ENCODE measurements at regions of chr10 and their contacts with region 1.

Region 1: GRCh38 chr10:26737730-26738129 is 40.2 kb downstream of the PDSS1 start:
- DNase-seq: peak; percentile 75
- H3K4me3 Mint-ChIP-seq: no peak overlapping the region
- H3K27ac Mint-ChIP-seq: peak overlapping the region; percentile 97
- H3K4me1 Mint-ChIP-seq: peaks cover 58% of the 10 kb centered on the region
- H3K27me3 Mint-ChIP-seq: no peaks in the 10 kb centered on the region

Region 2: GRCh38 chr10:26357203-26357602 is 380.5 kb before region 1 on chr10:
- CTCF ChIA-PET with region 1: no interaction called
- POLR2A ChIA-PET with region 1: no interaction called
- intact Hi-C with region 1: loop called (anchors 1 kb)
- DNase-seq: peak; percentile 20
- H3K4me3 Mint-ChIP-seq: no peak overlapping the region
- H3K27ac Mint-ChIP-seq: no peak overlapping the region
- H3K4me1 Mint-ChIP-seq: peaks cover 11% of the 10 kb centered on the region
- H3K27me3 Mint-ChIP-seq: peaks cover 17% of the 10 kb centered on the region

Region 3: DNA sequence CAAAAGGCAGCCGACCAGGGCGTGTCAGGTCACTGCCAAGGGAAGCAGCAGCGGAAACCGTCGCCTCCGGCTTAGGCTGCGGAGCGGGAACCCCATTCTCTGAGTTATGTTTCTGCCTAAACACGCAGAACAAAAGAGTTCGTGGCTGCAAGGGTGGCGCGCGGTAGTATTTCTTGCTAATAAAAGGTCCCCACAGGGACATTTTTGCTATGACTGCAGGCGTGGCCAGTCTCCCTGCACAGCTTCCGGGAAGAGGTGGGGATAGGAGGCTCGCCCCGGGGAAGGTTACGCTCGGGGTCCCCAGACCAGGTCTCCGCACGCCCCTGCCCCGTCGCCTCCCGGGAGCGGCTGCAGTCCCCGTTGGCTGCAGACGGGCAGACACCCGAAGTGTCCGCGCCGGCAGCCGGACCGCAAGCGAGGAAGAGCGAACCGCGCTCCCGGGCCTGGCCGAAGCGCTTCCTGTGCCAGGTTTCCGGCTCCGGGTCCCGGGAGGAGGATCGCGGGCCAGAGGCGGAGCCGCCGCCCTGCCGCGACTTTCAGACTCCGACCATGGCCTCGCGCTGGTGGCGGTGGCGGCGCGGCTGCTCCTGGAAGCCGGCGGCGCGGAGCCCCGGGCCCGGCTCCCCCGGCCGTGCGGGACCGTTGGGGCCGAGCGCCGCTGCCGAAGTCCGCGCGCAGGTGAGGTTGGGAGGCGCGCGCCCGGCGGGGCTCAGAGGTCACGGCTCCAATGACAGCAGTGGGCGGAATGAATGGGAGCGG is 40.4 kb before region 1 on chr10 and contains the start of gene PDSS1:
- CTCF ChIA-PET with region 1: no interaction called
- POLR2A ChIA-PET with region 1: interaction called, 3 read pairs
- intact Hi-C with region 1: loop called (anchors 2 kb)
- DNase-seq: peak; percentile 75
- H3K4me3 Mint-ChIP-seq: peak within 1 kb of the TSS; percentile 99
- H3K27ac Mint-ChIP-seq: peak within 1 kb of the TSS; percentile 92
- H3K4me1 Mint-ChIP-seq: peaks cover 25% of the 10 kb centered on the region
- H3K27me3 Mint-ChIP-seq: no peaks in the 10 kb centered on the region
- total RNA-seq, gene PDSS1: 12.9 to 15.4 TPM

Region 4: DNA sequence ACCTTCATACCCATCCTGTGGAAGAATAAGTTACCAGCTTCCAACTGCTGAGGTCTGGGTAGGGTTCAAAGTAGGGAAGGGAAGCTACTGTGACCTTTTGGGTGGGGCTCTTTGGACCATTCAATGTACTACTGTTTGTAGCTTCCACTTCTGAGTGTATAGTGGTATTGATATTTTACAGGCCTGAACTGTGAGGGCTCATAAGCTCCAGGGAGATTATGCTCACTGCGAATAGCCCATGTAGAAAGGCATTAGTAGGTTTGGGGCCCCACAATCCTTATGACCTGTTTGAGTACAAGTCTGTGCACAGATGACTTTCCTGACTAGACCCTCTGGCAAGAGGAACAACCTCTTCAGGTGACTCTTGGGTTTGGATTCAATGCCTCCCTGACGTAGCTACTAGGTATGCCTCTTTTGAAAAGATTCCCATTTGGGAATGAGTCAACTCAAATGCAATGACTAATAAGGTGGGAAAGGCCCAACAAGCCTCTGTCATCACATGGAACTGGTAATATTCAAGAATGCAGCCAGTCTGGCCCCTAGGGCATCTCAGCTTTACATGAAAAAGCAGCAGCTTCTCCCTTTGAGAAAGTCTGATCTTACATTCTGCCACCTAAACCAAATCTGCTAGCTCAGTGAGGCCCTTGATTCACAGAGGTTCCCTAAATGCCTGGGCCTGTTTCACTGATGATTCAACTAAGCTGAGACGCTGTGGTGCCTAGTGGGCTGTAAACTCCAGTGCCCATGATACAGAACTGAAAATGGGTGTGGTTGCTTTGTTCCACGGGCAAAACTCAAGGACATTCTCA is 43.3 kb after region 1 on chr10:
- CTCF ChIA-PET with region 1: interaction called, 6 read pairs
- POLR2A ChIA-PET with region 1: no interaction called
- intact Hi-C with region 1: loop called (anchors 1 kb)
- DNase-seq: peak; percentile 66
- H3K4me3 Mint-ChIP-seq: peak overlapping the region; percentile 21
- H3K27ac Mint-ChIP-seq: peak overlapping the region; percentile 82
- H3K4me1 Mint-ChIP-seq: peaks cover 81% of the 10 kb centered on the region
- H3K27me3 Mint-ChIP-seq: no peaks in the 10 kb centered on the region

Region 5: GRCh38 chr10:27155066-27155754 is 417.5 kb after region 1 on chr10 and contains the start of gene MASTL:
- CTCF ChIA-PET with region 1: no interaction called
- POLR2A ChIA-PET with region 1: interaction called, 4 read pairs
- intact Hi-C with region 1: loop called (anchors 2 kb)
- DNase-seq: peak; percentile 96
- H3K4me3 Mint-ChIP-seq: peak within 1 kb of the TSS; percentile 97
- H3K27ac Mint-ChIP-seq: peak within 1 kb of the TSS; percentile 100
- H3K4me1 Mint-ChIP-seq: peaks cover 39% of the 10 kb centered on the region
- H3K27me3 Mint-ChIP-seq: no peaks in the 10 kb centered on the region
- total RNA-seq, gene MASTL: 44.2 to 50.4 TPM

Region 6: DNA sequence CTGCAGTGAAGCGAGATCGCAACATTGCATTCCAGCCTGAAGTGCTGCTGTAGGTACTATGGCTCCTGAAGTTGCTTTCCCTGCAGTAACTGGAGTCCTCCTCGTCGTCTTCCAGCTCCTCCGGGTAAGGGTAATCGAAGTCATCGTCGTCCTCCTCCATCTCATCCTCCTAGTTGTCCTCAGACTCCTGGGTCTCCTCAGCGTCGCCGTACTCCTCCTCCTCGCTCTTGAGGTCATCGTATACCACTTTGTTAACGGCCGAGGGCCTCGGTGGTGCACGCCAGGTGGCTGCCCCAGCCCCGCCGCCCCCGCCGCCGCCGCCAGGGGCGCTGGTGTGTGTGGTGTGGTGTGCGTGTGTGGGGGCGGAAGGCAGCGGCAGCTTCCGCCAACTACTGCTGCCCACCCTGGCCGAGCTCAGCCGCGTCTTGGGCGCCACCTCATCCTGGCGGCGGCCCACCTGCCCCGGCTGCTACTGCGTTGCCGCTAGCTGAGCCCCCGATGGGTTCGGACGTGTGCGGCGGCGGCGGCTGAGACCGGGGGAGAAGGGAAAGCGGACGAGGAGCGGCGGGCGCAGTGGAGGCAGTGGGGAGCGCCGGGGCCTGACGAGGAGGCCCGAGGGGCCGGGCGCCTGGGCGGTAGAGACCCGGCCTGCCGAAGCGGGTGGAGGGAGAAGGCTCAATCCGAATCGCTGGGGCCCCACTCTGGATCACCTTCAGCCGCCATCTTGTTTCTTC is 514.7 kb after region 1 on chr10:
- CTCF ChIA-PET with region 1: no interaction called
- POLR2A ChIA-PET with region 1: no interaction called
- intact Hi-C with region 1: no loop called
- DNase-seq: peak; percentile 88
- H3K4me3 Mint-ChIP-seq: peak overlapping the region; percentile 79
- H3K27ac Mint-ChIP-seq: peak overlapping the region; percentile 77
- H3K4me1 Mint-ChIP-seq: peaks cover 12% of the 10 kb centered on the region
- H3K27me3 Mint-ChIP-seq: peaks cover 3% of the 10 kb centered on the region

Measured in activated CD4-positive, alpha-beta memory T cell treated with anti-CD3 and anti-CD28 coated beads for 36 hours (primary cell).